Common myeloid progenitor, CD34-positive (primary cell): ENCODE measurements at regions of chr6 and their contacts with region 1.

Region 1: DNA sequence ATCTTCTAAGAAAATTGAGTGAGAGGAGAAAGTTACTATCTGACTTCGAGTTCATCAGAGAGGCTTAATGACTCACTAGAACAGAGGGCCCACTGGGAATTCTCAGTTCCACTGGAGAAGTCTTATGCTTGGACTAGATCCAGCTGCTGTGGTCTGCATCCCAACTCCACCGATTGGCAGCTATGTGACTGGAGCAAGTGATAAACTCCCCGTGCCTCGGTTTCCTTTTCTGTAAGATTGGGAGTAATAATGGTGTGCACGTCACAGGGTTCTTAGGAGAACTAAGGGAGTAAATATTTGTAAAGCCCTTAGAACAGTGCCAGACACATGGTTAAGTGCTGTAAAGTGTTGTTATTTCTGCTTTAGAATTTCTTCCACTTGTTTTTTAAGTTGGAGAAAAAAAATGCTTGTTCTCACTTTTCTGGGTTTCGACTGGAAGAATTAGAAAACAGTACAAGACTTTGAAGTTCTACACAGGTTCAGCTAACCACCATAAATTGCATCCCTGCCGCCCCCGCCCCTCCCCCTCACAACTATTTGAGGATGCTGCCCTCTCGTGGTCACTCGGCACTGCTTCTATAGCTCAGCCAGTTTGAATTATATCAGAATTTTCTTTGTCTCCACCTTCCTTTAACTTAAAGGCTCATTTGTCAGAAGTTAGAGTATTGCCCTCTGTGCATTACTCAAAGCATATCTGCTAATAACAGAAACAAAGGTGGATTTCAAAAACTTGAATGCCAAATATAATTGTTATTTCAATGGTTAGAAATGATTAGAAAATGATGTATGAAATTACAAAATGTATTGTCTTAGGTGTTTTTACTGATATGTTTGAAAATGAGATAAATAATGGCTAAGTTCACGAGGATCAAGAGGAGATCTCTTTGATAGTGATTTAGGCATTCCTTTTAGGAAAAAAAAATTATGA is 95.0 kb upstream of the IFNGR1 start:
- DNase-seq: peak; percentile 73 to 83 (median 81)
- H3K4me3 ChIP-seq: no peak overlapping the region
- H3K27ac ChIP-seq: no peak overlapping the region
- H3K4me1 ChIP-seq: peaks cover 2 to 12% (median 8%) of the 10 kb centered on the region in 4 experiments
- H3K27me3 ChIP-seq: peaks cover 0 to 2% (median 0%) of the 10 kb centered on the region in 5 experiments

Region 2: GRCh38 chr6:137094411-137095008 is 219.7 kb before region 1 on chr6:
- CTCF ChIA-PET with region 1: interaction called, 21 read pairs
- POLR2A ChIA-PET with region 1: no interaction called
- DNase-seq: peak; percentile 75 to 87 (median 81)
- H3K4me3 ChIP-seq: no peak overlapping the region
- H3K27ac ChIP-seq: no peak overlapping the region
- H3K4me1 ChIP-seq: no peaks in the 10 kb centered on the region
- H3K27me3 ChIP-seq: peaks cover 0 to 3% (median 0%) of the 10 kb centered on the region in 5 experiments

Region 3: GRCh38 chr6:137271245-137272183 is 42.7 kb before region 1 on chr6:
- CTCF ChIA-PET with region 1: interaction called, 41 read pairs
- POLR2A ChIA-PET with region 1: no interaction called
- DNase-seq: peak; percentile 54 to 65 (median 60)
- H3K4me3 ChIP-seq: no peak overlapping the region
- H3K27ac ChIP-seq: no peak overlapping the region
- H3K4me1 ChIP-seq: peaks cover 0 to 1% (median 0%) of the 10 kb centered on the region in 4 experiments
- H3K27me3 ChIP-seq: no peaks in the 10 kb centered on the region

Region 4: GRCh38 chr6:137277971-137278637 is 36.1 kb before region 1 on chr6:
- CTCF ChIA-PET with region 1: interaction called, 10 read pairs
- POLR2A ChIA-PET with region 1: no interaction called
- DNase-seq: no peak
- H3K4me3 ChIP-seq: no peak overlapping the region
- H3K27ac ChIP-seq: no peak overlapping the region
- H3K4me1 ChIP-seq: peaks cover 0 to 12% (median 4%) of the 10 kb centered on the region in 4 experiments
- H3K27me3 ChIP-seq: no peaks in the 10 kb centered on the region

Region 5: GRCh38 chr6:137297887-137298286 is 16.3 kb before region 1 on chr6:
- CTCF ChIA-PET with region 1: interaction called, 13 read pairs
- POLR2A ChIA-PET with region 1: no interaction called
- DNase-seq: peak; percentile 19 to 50 (median 49)
- H3K4me3 ChIP-seq: no peak overlapping the region
- H3K27ac ChIP-seq: no peak overlapping the region
- H3K4me1 ChIP-seq: peaks cover 0 to 20% (median 9%) of the 10 kb centered on the region in 4 experiments
- H3K27me3 ChIP-seq: no peaks in the 10 kb centered on the region